ENCODE measurements at regions of chr21 and their contacts with region 1.

Region 1: DNA sequence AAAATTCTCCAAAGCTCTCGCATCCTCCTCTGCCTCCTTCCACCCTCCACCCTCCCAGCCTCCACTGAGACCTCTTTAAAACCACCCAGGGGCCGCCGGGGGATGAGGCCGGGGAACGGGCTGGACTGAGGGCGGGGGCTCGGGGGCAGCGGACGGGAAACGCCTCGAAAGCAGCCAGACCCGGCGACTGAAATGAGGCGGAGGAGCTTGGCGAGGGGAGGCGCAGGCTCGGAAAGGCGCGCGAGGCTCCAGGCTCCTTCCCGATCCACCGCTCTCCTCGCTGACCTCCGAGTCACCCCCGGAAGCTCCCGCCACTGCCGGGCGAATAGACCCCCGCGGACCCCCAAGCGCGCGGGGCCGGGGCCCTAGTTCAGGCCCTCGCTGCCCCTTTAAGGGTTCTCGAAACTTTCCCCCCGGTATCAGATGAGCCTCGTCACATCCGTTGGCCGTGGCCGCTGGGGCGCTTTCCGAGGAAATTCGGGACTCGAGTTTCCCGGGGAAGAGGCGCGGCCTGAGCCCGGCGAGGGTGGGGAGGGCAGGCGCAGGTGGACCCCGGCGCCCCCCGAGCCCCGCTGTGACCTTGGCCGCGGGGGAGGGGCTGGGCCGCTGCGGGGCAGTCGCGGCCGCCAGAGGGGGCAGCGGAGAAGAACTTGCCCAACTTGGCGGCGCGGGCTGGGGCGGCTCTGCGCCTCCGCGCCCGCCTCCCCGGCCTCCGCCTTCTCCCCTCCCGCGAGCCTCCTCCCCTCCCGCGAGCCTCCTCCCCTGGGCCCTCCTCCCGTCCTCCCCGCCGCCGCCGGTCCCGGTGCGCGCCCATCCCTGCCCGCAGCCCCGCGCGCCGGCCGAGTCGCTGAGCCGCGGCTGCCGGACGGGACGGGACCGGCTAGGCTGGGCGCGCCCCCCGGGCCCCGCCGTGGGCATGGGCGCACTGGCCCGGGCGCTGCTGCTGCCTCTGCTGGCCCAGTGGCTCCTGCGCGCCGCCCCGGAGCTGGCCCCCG is at the start of gene BACE2:
- H3K4me3 ChIP-seq: peak within 1 kb of the TSS; percentile 62
- H3K27ac ChIP-seq: peak within 1 kb of the TSS; percentile 89
- H3K4me1 ChIP-seq: peaks cover 6% of the 10 kb centered on the region
- CTCF ChIP-seq: peak; percentile 36

Region 2: DNA sequence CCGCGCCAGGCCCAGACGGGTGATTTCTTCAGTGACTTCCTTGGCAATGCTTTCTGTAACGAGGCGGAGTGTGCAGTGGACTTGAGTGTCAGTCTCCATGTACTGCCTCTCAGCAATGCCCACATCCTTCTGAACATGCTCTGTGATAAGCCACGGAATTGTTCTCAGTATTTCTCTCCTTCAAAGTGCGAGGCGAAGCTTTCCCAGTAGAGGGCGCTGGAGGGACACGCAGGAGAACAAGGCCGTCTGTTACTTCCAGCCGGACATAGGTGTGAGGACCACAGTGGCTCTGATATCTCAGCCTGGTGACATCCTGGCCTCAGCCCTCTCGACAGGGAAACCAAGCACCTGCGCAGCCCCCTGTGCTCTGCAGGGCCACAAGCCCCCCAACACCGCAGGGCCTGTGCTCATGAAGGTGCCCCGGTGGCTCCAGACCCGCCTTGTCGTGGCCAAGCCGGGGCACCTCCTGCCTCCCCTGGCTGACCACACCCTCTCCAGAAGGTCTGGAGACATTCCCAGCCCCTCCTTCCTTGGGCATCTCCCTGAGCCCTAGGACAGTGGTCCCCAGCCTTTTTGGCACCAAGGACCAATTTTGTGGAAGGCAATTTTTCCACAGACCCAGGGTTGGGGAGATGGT is 45.7 kb before region 1 on chr21:
- CTCF ChIA-PET with region 1: interaction called, 18 read pairs
- POLR2A ChIA-PET with region 1: no interaction called
- H3K4me3 ChIP-seq: no peak overlapping the region
- H3K27ac ChIP-seq: no peak overlapping the region
- H3K4me1 ChIP-seq: no peaks in the 10 kb centered on the region
- CTCF ChIP-seq: peak; percentile 76; the same call in 1 of the 2 replicates

Region 3: DNA sequence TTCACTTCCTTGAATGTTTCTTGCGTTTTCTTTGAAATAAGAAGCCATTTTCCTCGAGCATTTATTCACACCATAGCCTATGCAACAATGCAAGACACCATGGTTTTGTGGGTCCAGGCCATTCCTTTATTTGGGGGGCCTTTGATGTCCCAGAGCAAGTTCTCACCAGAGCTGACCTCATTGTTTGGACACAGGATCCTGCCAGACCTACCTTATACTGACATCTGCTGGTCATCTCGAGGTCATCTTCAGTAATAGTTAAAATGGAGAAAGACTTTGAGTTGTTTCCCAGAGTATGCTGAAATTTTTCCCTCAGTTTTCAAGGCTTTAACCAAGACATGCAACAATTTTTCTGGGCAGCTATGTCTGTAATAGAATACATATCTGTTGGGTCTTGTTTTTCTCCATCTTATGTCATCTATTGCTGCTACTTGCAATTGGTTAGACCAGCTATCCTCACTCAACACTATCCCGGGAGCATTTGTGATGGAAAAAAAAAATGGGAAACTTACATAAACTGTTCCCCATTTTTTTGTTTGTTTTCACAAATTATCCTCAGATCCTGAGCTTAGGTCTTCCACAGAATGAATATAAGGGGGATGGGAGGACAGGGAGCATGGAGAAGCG is 33.6 kb before region 1 on chr21:
- CTCF ChIA-PET with region 1: interaction called, 13 read pairs
- POLR2A ChIA-PET with region 1: no interaction called
- H3K4me3 ChIP-seq: no peak overlapping the region
- H3K27ac ChIP-seq: no peak overlapping the region
- H3K4me1 ChIP-seq: no peaks in the 10 kb centered on the region
- CTCF ChIP-seq: peak; percentile 24; the same call in 1 of the 2 replicates

Region 4: GRCh38 chr21:41186662-41187539 is 19.3 kb after region 1 on chr21:
- CTCF ChIA-PET with region 1: interaction called, 31 read pairs
- POLR2A ChIA-PET with region 1: no interaction called
- H3K4me3 ChIP-seq: no peak overlapping the region
- H3K27ac ChIP-seq: no peak overlapping the region
- H3K4me1 ChIP-seq: no peaks in the 10 kb centered on the region
- CTCF ChIP-seq: no peak

Region 5: DNA sequence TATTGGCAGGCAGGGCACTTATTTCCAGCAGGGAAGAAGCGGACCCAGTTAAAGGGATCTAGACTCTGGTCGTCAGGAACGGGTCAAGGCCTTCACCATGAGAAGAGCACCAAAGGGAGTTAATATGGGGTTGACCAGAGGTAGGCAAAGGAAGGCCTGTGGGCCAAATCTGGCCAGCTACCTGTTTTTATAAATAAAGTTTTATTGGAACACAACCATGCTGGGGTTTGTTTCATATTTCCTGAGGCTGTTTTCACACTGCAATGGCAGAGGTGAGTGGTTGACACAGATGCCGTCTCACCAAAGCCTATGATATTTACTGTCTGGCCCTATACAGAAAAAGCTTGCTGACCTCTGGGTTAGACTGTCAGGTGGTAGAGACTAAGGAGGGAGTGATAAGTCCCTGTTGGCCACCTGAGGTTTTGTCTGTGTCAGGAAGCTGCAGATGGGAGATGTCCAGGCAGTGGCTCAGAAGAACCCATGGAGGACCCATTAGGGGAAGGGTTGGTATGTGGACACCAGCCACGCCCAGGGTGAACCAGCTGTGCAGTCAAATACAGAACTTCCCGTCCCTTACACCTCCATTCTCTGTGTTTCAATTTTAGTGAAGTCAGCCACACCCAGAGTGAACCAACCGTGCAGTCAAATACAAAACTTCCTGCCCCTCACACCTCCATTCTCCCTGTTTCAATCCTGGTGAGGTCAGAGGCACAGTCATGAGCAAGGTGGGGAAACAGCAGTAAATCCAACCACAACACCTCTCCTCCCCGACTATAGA is 27.5 kb after region 1 on chr21:
- CTCF ChIA-PET with region 1: interaction called, 31 read pairs
- POLR2A ChIA-PET with region 1: interaction called, 4 read pairs
- H3K4me3 ChIP-seq: no peak overlapping the region
- H3K27ac ChIP-seq: no peak overlapping the region
- H3K4me1 ChIP-seq: peaks cover 5% of the 10 kb centered on the region; the same call in 1 of the 2 replicates
- CTCF ChIP-seq: no peak

Measured in HEK293 (cell line).